Sciatic nerve (tissue), 2 donors: ENCODE measurements at regions of chr9 and their contacts with region 1.

Region 1: GRCh38 chr9:479976-480375 is 265.3 kb downstream of the DOCK8 start:
- DNase-seq: no peak
- ATAC-seq: no peak

Region 2: GRCh38 chr9:419571-420402 is 60.2 kb before region 1 on chr9:
- intact Hi-C with region 1: loop called (anchors 5 kb)
- DNase-seq: no peak
- ATAC-seq: peak; percentile 53

Region 3: DNA sequence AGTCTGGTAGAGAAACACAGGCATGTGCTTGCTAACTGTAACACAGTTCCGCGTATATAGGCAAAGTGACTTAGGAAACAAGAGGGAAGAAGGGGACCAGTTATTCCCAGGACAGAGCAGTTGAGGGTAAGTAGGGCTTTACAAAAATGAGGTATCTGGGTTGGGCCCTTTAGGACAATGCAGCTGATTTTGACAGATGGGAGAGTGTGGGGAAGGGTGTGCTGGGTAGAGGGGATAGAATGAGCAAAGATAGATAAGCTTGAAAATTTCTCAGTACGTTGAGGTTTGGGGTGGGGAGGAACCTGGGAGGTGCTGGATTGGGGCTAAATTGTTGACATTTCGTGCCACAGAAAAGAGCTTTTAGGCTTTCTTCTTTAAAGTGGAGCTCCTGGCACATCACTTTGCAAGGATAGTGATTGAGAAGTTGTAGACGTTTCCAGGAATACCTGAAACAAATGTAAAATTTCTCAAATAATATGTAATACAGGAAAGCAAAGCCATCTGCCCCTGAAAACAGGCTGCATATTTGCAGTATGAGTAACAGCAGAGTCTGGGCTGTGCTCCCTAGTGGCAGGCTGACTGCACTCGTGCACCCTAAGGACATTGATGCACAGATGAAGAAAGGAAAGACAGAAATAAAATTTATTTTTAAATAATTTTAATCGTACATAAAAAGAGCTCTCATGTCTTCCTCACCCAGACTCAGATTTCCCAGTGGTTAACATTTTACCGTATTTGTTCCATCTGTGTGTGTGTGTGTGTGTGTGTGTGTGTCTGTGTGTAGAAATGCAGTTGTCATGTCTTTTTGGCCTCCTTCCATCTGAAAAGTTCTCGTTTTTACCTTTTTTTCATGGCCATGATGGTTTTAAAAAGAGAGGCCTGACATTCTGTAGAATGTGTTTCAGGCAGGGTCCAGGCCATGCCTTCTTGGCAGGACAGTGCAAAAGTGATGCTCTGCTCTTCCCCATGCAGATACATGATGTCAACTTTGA is 216.7 kb after region 1 on chr9:
- intact Hi-C with region 1: no loop called
- DNase-seq: no peak
- ATAC-seq: peak; percentile 47